Esophagus muscularis mucosa (tissue), 4 donors: ENCODE measurements at regions of chr17 and their contacts with region 1.

Region 1: GRCh38 chr17:42193969-42194899 is at the start of gene GHDC:
- DNase-seq: peak; percentile 95
- H3K4me3 ChIP-seq: peak within 1 kb of the TSS; percentile 67 to 92 (median 80)
- H3K27ac ChIP-seq: peak within 1 kb of the TSS; percentile 82 to 89 (median 84)
- H3K4me1 ChIP-seq: peaks cover 15 to 31% (median 23%) of the 10 kb centered on the region in 4 donors
- H3K27me3 ChIP-seq: no peaks in the 10 kb centered on the region
- CTCF ChIP-seq: peak in 1 of 3 experiments; percentile 36
- EP300 ChIP-seq: no peak
- POLR2A ChIP-seq: no peak
- total RNA-seq, gene GHDC: 20.3 to 31.3 (median 22.0) TPM

Region 2: GRCh38 chr17:42112552-42113176 is 81.6 kb before region 1 on chr17 and contains the start of gene DHX58:
- intact Hi-C with region 1: no loop called
- DNase-seq: peak; percentile 96
- H3K4me3 ChIP-seq: peak within 1 kb of the TSS; percentile 60 to 71 (median 66)
- H3K27ac ChIP-seq: peak within 1 kb of the TSS; percentile 87 to 94 (median 90)
- H3K4me1 ChIP-seq: peaks cover 19 to 52% (median 36%) of the 10 kb centered on the region in 4 donors
- H3K27me3 ChIP-seq: no peaks in the 10 kb centered on the region
- CTCF ChIP-seq: no peak
- EP300 ChIP-seq: no peak
- POLR2A ChIP-seq: no peak
- total RNA-seq, gene DHX58: 9.6 to 11.7 (median 11.3) TPM

Region 3: DNA sequence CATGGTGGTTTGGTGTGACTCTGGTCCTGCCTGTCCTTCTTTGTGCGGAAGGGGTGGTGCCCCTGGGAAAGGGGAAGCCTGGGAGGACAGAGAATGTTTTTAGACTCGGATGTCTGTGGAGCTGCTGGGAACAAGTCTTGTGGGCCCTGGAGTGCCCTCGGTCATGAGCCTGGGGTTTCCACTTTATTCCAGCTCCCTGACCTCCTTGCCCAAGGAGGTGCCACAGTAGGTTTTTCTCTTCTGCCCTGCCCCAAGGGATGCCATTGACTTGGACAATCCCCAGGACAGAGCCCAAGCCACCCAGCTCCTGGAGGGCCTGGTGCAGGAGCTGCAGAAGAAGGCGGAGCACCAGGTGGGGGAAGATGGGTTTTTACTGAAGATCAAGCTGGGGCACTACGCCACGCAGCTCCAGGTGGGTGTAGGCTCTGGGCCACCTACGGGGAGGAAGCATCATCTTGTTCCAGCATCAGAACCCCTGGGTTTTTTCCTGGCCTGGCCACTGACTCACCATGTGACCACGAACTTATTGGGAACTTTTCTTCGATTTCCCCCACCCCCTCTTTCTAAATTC is 95.5 kb after region 1 on chr17:
- intact Hi-C with region 1: loop called (anchors 10 kb)
- DNase-seq: no peak
- H3K4me3 ChIP-seq: peak overlapping the region; percentile 73 to 87 (median 79)
- H3K27ac ChIP-seq: peak overlapping the region; percentile 89 to 96 (median 91)
- H3K4me1 ChIP-seq: peaks cover 34 to 66% (median 62%) of the 10 kb centered on the region in 4 donors
- H3K27me3 ChIP-seq: no peaks in the 10 kb centered on the region
- CTCF ChIP-seq: no peak
- EP300 ChIP-seq: no peak
- POLR2A ChIP-seq: no peak